ENCODE measurements at regions of chr12 and their contacts with region 1.

Region 1: GRCh38 chr12:70149013-70149412 is 94.2 kb upstream of the CNOT2 start:
- DNase-seq: no peak

Region 2: DNA sequence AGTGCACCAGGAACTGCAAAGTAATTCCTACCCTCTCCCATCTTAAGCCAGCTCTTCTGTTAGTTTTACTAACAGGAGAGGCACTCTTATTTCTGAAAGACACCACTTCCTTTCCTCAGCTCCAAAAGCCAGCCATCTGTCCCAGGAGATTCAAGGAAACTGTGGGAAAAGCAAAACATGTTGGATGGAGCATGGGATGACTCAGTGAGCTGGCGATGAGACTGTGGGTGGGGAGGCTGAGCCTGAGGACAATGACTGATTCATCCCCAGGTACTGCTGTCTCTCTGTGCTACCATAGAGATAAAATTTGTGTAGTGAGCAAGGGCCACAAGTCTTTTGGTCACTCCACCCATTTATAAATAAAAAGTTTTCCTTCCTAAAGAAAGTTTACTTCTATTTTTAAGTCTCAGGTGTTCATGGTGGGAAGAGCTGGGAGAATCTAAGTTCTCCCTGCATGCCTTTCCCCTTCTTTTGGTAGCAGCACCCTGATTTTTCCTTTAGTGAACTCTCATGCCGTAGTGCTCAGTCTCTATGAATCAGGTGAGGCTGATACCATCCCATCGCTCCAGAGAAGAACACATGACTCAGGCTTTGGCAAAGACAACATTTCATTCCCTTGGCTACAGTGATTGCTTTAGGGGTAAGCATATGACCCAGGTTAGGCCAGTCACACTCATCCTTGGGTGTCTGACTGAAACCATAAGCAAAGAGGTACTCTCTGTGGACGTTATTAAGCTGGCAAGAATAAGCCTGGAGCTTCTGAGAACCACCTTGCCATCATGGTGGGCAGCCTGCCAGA is 182.4 kb before region 1 on chr12:
- in situ Hi-C with region 1: no loop called
- DNase-seq: peak; percentile 83

Region 3: GRCh38 chr12:70101064-70101463 is 47.9 kb before region 1 on chr12:
- in situ Hi-C with region 1: loop called (anchors 5 kb)
- DNase-seq: no peak